CD4-positive, alpha-beta T cell (primary cell): ENCODE measurements at regions of chrX and their contacts with region 1.

Region 1: GRCh38 chrX:18674788-18675735 is 3.2 kb upstream of the RS1 start:
- DNase-seq: peak; percentile 60 to 90 (median 74)
- ATAC-seq: peak; percentile 90
- H3K4me3 ChIP-seq: peak overlapping the region; percentile 73
- H3K4me3 Mint-ChIP-seq: peak overlapping the region; percentile 90
- H3K27ac ChIP-seq: peak overlapping the region; percentile 61 to 64
- H3K27ac Mint-ChIP-seq: peak overlapping the region; percentile 95
- H3K4me1 ChIP-seq: peaks cover 7% of the 10 kb centered on the region
- H3K4me1 Mint-ChIP-seq: peaks cover 16% of the 10 kb centered on the region
- H3K27me3 ChIP-seq: no peaks in the 10 kb centered on the region
- H3K27me3 Mint-ChIP-seq: peaks cover 3% of the 10 kb centered on the region
- CTCF ChIP-seq: no peak

Region 2: DNA sequence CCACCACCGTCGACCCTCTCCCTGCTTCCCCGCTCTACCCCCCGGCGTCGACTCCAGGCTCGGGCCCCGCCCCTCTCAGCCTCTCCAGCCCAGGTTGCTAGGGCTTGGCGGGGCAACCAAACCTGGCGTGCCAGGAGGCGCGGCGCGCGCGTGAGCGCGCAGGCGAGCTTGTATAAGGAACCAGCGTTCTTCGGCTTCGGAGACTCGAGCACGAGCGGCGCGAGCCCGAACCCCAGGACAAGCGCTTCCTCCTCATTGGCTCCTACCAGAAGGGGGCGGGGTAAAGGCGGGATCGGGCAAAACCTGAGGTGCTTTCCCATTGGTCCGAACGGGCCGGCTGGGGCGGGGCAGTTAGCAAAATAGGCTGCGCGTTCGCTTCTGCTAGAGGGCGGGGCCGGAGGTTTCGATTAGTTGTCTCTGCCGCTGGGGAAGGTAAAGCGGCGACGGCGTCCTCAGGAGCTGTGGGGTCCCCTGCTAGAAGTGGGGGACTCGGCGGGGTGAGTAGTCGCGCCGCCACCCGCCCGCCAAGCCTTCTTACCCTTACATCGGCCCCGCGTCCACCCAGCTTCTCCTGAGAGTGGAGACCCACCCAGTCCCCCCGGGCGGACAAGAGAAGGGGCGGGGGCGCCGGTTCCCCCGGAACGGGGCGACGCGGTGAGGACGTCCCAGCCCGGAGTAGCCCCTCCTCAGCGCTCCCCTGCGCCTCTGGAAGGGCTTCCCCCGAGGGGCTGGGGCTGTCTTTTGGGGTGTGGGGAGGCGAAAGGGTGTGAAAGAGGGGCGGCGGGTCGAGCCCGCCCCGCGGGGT is 249.7 kb before region 1 on chrX and contains the start of gene CDKL5:
- CTCF ChIA-PET with region 1: no interaction called
- POLR2A ChIA-PET with region 1: interaction called, 4 read pairs
- intact Hi-C with region 1: loop called in 1 of 2 experiments (anchors 5 kb)
- DNase-seq: peak; percentile 91 to 98 (median 94)
- ATAC-seq: peak; percentile 89
- H3K4me3 ChIP-seq: peak within 1 kb of the TSS; percentile 86
- H3K4me3 Mint-ChIP-seq: peak within 1 kb of the TSS; percentile 99
- H3K27ac ChIP-seq: peak within 1 kb of the TSS; percentile 74 to 81
- H3K27ac Mint-ChIP-seq: peak within 1 kb of the TSS; percentile 89
- H3K4me1 ChIP-seq: no peaks in the 10 kb centered on the region
- H3K4me1 Mint-ChIP-seq: peaks cover 18% of the 10 kb centered on the region
- H3K27me3 ChIP-seq: no peaks in the 10 kb centered on the region
- H3K27me3 Mint-ChIP-seq: no peaks in the 10 kb centered on the region
- CTCF ChIP-seq: no peak
- total RNA-seq, gene CDKL5: 2.2 to 2.4 TPM

Region 3: GRCh38 chrX:18886344-18887161 is 211.5 kb after region 1 on chrX:
- CTCF ChIA-PET with region 1: no interaction called
- POLR2A ChIA-PET with region 1: no interaction called
- intact Hi-C with region 1: loop called in 1 of 2 experiments (anchors 5 kb)
- DNase-seq: peak in 12 of 14 experiments; percentile 13 to 68 (median 29)
- ATAC-seq: peak; percentile 60
- H3K4me3 ChIP-seq: peak overlapping the region; percentile 61
- H3K4me3 Mint-ChIP-seq: peak overlapping the region; percentile 87
- H3K27ac ChIP-seq: peak overlapping the region; percentile 29 to 63
- H3K27ac Mint-ChIP-seq: peak overlapping the region; percentile 79
- H3K4me1 ChIP-seq: peaks cover 35% of the 10 kb centered on the region
- H3K4me1 Mint-ChIP-seq: peaks cover 40% of the 10 kb centered on the region
- H3K27me3 ChIP-seq: no peaks in the 10 kb centered on the region
- H3K27me3 Mint-ChIP-seq: no peaks in the 10 kb centered on the region
- CTCF ChIP-seq: peak; percentile 32

Region 4: GRCh38 chrX:18961686-18962085 is 286.6 kb after region 1 on chrX:
- CTCF ChIA-PET with region 1: no interaction called
- POLR2A ChIA-PET with region 1: no interaction called
- intact Hi-C with region 1: no loop called
- DNase-seq: peak in 1 of 14 experiments; percentile 8
- ATAC-seq: no peak
- H3K4me3 ChIP-seq: no peak overlapping the region
- H3K4me3 Mint-ChIP-seq: no peak overlapping the region
- H3K27ac ChIP-seq: no peak overlapping the region
- H3K27ac Mint-ChIP-seq: no peak overlapping the region
- H3K4me1 ChIP-seq: peaks cover 2% of the 10 kb centered on the region
- H3K4me1 Mint-ChIP-seq: peaks cover 32% of the 10 kb centered on the region
- H3K27me3 ChIP-seq: no peaks in the 10 kb centered on the region
- H3K27me3 Mint-ChIP-seq: no peaks in the 10 kb centered on the region
- CTCF ChIP-seq: no peak

Region 5: DNA sequence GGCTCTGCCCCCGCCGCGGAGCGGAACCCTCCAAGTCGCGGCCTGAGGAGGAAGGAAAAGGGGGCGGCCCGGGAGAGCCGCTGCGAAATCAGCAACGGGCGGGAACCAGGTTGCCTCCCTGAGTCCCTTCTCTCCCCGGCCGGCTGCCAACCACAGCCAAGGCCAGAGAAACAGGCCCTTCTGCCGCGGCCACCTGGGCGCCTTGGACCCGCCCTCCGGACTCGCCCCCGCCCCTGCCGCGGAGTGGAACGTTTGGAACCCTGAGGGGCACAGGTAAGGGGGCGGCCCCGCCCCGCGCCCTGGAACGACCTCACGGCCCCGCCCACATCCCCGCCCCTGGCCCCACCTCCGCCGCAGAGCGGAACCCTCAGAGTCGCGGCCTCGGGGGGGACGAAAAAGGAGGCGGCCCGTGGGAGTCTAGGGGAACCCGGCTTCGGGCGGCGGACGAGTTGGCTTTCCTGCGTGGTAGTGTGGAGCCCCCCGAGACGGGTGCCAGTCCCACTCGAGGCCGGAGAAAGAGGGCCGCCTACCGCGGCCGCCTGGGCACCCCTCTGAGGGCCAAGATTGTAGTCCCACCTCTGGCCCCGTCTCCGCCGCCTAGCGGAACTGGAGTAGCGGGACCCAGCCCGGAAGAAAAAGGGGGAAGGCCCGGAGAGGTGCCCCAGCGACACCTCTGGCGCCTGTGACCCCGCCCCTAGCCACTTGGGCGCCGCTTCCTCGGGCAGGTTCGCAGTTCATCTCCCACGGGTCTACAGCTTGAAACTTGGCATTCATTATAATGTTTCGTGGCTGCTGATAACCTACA is 309.5 kb after region 1 on chrX:
- CTCF ChIA-PET with region 1: no interaction called
- POLR2A ChIA-PET with region 1: no interaction called
- intact Hi-C with region 1: loop called (anchors 2 to 10 kb)
- DNase-seq: peak; percentile 78 to 92 (median 84)
- ATAC-seq: peak; percentile 85
- H3K4me3 ChIP-seq: peak overlapping the region; percentile 78
- H3K4me3 Mint-ChIP-seq: peak overlapping the region; percentile 92
- H3K27ac ChIP-seq: peak overlapping the region; percentile 83 to 94
- H3K27ac Mint-ChIP-seq: peak overlapping the region; percentile 91
- H3K4me1 ChIP-seq: peaks cover 19% of the 10 kb centered on the region
- H3K4me1 Mint-ChIP-seq: peaks cover 21% of the 10 kb centered on the region
- H3K27me3 ChIP-seq: no peaks in the 10 kb centered on the region
- H3K27me3 Mint-ChIP-seq: no peaks in the 10 kb centered on the region
- CTCF ChIP-seq: peak; percentile 26

Region 6: DNA sequence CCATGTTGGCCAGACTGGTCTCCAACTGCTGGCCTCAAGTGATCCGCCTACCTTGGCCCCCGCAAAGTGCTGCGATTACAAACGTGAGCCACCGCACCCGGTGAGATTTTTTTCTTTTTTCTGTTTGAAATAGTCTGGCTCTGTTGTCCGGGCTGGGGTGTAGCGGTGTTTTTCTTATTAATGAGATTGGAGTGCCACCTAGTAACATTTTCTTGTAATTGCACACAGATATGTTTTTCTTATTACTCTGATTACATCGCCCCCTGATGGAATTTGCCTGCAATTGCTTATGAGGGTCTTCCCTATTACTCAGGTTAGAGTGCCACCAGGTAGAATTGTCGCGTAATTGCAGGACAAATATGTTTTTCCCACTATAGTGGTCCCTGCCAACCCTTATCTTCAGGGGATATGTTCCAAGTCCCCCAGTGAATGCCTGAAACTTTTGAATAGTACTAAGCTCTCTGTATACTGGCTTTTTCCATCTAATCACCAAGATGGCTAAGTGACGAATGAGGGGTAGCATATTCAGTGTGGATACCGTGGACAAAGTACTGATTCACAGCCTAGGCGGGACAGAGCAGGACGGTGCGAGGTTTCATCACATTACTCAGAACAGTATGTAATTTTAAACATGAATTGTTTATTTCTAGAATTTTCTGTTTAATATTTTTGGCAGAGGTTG is 660.0 kb after region 1 on chrX:
- CTCF ChIA-PET with region 1: no interaction called
- POLR2A ChIA-PET with region 1: no interaction called
- intact Hi-C with region 1: loop called (anchors 5 kb)
- DNase-seq: peak in 3 of 14 experiments; percentile 10 to 45 (median 30)
- ATAC-seq: peak; percentile 32
- H3K4me3 ChIP-seq: no peak overlapping the region
- H3K4me3 Mint-ChIP-seq: no peak overlapping the region
- H3K27ac ChIP-seq: no peak overlapping the region
- H3K27ac Mint-ChIP-seq: no peak overlapping the region
- H3K4me1 ChIP-seq: no peaks in the 10 kb centered on the region
- H3K4me1 Mint-ChIP-seq: no peaks in the 10 kb centered on the region
- H3K27me3 ChIP-seq: no peaks in the 10 kb centered on the region
- H3K27me3 Mint-ChIP-seq: no peaks in the 10 kb centered on the region
- CTCF ChIP-seq: no peak

Region 7: DNA sequence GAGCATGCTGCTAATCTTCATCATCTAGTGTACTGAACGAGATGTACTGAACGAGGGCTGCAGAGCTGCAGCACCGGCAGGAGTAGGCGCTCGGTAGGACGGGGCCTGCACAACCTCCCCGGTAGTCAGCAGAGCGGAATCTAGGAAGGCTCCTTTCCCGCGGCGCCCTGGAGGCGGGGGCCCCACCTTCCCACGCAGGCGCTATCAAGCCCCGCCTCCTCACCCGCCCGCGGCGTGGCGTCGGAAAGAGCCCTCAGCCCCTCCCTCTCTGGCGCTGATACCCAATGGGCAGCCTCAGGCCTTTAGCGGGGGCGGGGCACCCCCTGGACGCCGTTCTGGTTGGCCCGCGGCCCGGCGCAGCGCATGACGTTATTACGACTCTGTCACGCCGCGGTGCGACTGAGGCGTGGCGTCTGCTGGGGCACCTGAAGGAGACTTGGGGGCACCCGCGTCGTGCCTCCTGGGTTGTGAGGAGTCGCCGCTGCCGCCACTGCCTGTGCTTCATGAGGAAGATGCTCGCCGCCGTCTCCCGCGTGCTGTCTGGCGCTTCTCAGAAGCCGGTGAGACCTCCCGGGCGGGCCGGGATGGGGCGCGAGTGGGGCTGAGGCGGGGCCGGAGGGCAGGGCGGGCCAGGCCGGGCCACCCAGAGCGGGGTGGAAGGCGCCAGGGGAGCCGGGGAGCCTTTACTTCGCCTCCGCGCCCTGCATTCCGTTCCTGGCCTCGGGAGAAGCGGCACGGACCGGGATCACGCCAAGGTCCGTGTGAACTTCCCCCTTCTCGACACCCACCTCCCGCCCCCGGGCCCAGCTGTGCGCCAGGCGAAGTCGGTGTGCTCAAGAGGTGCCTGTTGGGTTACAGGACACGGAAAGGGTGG is 668.7 kb after region 1 on chrX and contains the start of gene PDHA1:
- CTCF ChIA-PET with region 1: no interaction called
- POLR2A ChIA-PET with region 1: no interaction called
- intact Hi-C with region 1: loop called (anchors 5 kb)
- DNase-seq: peak; percentile 82 to 96 (median 90)
- ATAC-seq: peak; percentile 96
- H3K4me3 ChIP-seq: peak within 1 kb of the TSS; percentile 74
- H3K4me3 Mint-ChIP-seq: peak within 1 kb of the TSS; percentile 90
- H3K27ac ChIP-seq: peak within 1 kb of the TSS; percentile 56 to 60
- H3K27ac Mint-ChIP-seq: peak within 1 kb of the TSS; percentile 90
- H3K4me1 ChIP-seq: peaks cover 27% of the 10 kb centered on the region
- H3K4me1 Mint-ChIP-seq: peaks cover 19% of the 10 kb centered on the region
- H3K27me3 ChIP-seq: no peaks in the 10 kb centered on the region
- H3K27me3 Mint-ChIP-seq: no peaks in the 10 kb centered on the region
- CTCF ChIP-seq: no peak
- total RNA-seq, gene PDHA1: 95.8 to 99.0 TPM

Region 8: DNA sequence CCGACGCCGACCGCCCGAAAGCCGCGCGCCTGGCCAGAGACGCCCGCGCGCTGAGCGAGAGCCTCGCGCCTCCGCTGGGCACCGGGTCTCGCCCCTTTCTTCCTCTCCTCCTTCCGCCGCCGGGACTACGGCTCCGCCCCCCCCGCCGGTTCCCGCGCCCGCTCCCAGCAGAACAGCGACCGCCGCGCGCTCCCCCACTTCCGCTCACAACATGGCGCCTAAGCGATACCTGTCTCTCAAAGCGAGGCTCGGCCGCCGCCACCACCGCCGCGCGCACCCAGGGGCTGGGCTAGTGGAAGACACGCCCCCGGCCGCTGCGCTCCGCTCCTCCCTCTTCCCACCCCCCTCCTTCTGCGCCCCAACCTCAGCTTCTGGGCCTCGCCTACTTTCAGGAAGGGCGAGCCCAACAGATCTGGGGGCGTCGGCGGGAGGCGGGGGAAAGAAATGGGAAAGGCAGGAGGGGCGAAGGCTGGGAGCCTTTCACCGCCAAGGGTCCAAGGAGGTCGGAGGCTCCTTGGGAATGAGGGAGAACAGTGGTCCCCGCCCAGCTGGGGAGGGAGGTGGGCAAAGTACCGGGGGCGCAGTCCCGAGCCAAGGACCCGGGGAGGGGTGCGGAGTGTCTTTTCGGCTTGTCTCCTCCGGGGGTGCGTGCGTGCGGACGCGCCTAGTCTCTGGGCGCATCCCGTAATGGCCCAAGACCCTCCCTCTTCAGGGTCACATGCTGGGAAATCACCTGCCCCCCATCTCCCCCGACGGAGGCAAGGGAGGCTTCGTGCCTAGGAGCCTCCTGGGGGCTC is 1591.9 kb after region 1 on chrX and contains the start of gene RPS6KA3:
- CTCF ChIA-PET with region 1: no interaction called
- POLR2A ChIA-PET with region 1: no interaction called
- intact Hi-C with region 1: loop called in 1 of 2 experiments (anchors 10 kb)
- DNase-seq: peak; percentile 79 to 95 (median 89)
- ATAC-seq: peak; percentile 81
- H3K4me3 ChIP-seq: peak within 1 kb of the TSS; percentile 86
- H3K4me3 Mint-ChIP-seq: peak within 1 kb of the TSS; percentile 99
- H3K27ac ChIP-seq: peak within 1 kb of the TSS; percentile 75 to 76
- H3K27ac Mint-ChIP-seq: peak within 1 kb of the TSS; percentile 97
- H3K4me1 ChIP-seq: peaks cover 15% of the 10 kb centered on the region
- H3K4me1 Mint-ChIP-seq: peaks cover 29% of the 10 kb centered on the region
- H3K27me3 ChIP-seq: no peaks in the 10 kb centered on the region
- H3K27me3 Mint-ChIP-seq: no peaks in the 10 kb centered on the region
- CTCF ChIP-seq: no peak
- total RNA-seq, gene RPS6KA3: 39.6 to 39.7 TPM